ENCODE measurements at regions of chr4 and their contacts with region 1.

Region 1: GRCh38 chr4:157045507-157046127 is 30.3 kb upstream of the GLRB start:
- DNase-seq: peak; percentile 32
- ATAC-seq: peak; percentile 90
- H3K4me3 ChIP-seq: no peak overlapping the region
- H3K27ac ChIP-seq: no peak overlapping the region
- H3K4me1 ChIP-seq: peaks cover 4% of the 10 kb centered on the region; the same call in 1 of the 2 replicates
- H3K27me3 ChIP-seq: no peaks in the 10 kb centered on the region
- CTCF ChIP-seq: peak; percentile 75

Region 2: GRCh38 chr4:156968479-156968984 is 77.1 kb before region 1 on chr4:
- CTCF ChIA-PET with region 1: interaction called, 6 read pairs
- POLR2A ChIA-PET with region 1: no interaction called
- in situ Hi-C with region 1: no loop called
- intact Hi-C with region 1: loop called (anchors 5 kb)
- DNase-seq: no peak
- ATAC-seq: peak; percentile 51; the same call in 1 of the 2 replicates
- H3K4me3 ChIP-seq: peak overlapping the region; percentile 68 to 93
- H3K27ac ChIP-seq: peak overlapping the region; percentile 65; the same call in 1 of the 2 replicates
- H3K4me1 ChIP-seq: peaks cover 29% of the 10 kb centered on the region
- H3K27me3 ChIP-seq: no peaks in the 10 kb centered on the region
- CTCF ChIP-seq: peak; percentile 76

Region 3: GRCh38 chr4:156983366-156983765 is 62.3 kb before region 1 on chr4:
- CTCF ChIA-PET with region 1: no interaction called
- POLR2A ChIA-PET with region 1: no interaction called
- in situ Hi-C with region 1: no loop called
- intact Hi-C with region 1: loop called (anchors 5 kb)
- DNase-seq: no peak
- ATAC-seq: no peak
- H3K4me3 ChIP-seq: no peak overlapping the region
- H3K27ac ChIP-seq: no peak overlapping the region
- H3K4me1 ChIP-seq: no peaks in the 10 kb centered on the region
- H3K27me3 ChIP-seq: no peaks in the 10 kb centered on the region
- CTCF ChIP-seq: peak; percentile 26; the same call in 1 of the 2 replicates